ENCODE measurements at regions of chr14 and their contacts with region 1.

Region 1: GRCh38 chr14:89365061-89365801 is 51.8 kb downstream of the FOXN3 start:
- DNase-seq: peak; percentile 84
- H3K4me3 Mint-ChIP-seq: peak overlapping the region; percentile 80
- H3K27ac Mint-ChIP-seq: peak overlapping the region; percentile 92
- H3K4me1 Mint-ChIP-seq: peaks cover 38% of the 10 kb centered on the region
- H3K27me3 Mint-ChIP-seq: no peaks in the 10 kb centered on the region

Region 2: GRCh38 chr14:89303457-89304435 is 61.5 kb before region 1 on chr14:
- intact Hi-C with region 1: loop called (anchors 2 kb)
- DNase-seq: peak; percentile 80
- H3K4me3 Mint-ChIP-seq: peak overlapping the region; percentile 84
- H3K27ac Mint-ChIP-seq: peak overlapping the region; percentile 88
- H3K4me1 Mint-ChIP-seq: peaks cover 41% of the 10 kb centered on the region
- H3K27me3 Mint-ChIP-seq: no peaks in the 10 kb centered on the region

Region 3: DNA sequence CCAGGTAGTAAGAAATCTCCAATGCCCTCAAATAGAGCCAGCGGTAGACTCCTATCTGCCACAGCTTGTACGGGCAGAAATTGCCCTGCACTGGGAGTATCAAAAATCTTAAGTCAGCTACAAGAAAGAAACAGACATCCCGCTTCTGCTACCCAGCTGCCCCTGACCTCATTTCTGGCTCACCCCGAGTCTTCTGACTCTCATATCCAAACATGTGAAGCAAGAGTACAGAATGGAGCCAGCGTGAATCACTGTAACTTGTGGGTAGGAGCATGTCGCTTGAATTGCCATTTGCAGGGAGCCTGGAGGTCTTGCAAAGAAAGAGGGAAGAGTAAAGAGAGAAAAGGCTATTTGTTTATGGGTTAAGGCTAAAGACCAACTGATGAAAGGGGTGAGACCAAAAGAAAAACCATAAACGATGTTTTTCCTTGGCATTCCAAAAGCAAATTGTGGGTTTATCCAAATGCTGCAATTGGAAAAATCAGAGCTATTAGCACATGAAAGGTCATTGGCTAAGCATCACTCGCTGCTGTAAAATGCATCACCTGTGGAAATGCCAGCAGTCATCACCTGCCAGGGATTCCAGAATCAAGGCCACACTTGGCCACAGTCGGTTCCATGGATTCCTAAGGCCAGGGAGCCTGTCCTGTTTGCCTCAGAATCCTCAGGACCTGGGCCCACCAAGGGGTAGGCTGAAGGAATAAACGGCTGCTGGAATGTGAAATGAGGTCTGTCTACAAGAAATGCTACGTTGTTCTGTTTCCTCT is 34.8 kb before region 1 on chr14:
- intact Hi-C with region 1: no loop called
- DNase-seq: no peak
- H3K4me3 Mint-ChIP-seq: no peak overlapping the region
- H3K27ac Mint-ChIP-seq: no peak overlapping the region
- H3K4me1 Mint-ChIP-seq: peaks cover 17% of the 10 kb centered on the region
- H3K27me3 Mint-ChIP-seq: no peaks in the 10 kb centered on the region

Region 4: DNA sequence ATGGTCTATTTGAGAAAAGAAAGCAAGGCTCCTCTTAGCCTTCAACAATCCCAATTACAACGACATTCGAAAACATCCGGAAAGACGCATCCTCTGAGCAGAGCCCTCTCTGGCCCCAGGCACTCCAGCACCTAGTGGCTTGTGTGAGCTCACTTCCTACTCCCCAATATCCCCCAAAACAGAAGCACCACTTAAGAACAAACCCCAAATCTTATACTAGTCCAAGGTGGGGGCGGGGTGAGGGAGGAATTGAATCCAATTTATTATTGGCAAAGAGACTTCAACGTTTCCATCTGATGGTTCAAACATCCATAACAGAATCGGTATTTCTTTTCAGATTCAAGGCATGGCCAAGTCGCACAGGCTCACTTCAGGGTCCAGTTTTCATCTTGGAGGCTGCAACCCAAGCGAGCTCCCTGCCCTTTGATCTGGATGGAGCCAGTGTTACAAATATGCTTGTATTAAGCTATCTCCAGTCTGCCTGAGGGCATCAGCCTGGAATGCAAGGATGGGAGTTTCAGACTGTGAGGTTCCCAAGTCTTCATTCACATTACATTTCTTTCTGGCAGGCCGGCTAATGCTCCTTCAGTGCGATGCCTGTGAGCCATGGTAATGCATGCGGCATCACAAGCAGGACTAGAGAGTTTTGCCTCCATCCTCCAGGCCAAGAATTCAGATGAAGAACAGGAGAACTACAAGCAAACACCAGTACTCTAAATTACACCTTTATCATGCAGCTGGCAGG is 184.3 kb after region 1 on chr14:
- intact Hi-C with region 1: no loop called
- DNase-seq: no peak
- H3K4me3 Mint-ChIP-seq: no peak overlapping the region
- H3K27ac Mint-ChIP-seq: peak overlapping the region; percentile 48
- H3K4me1 Mint-ChIP-seq: peaks cover 21% of the 10 kb centered on the region
- H3K27me3 Mint-ChIP-seq: no peaks in the 10 kb centered on the region

Measured in activated CD4-positive, alpha-beta T cell treated with anti-CD3 and anti-CD28 coated beads, Interleukin-2, amount 10 ng/mL, durations not matched to agents 24 days and 14 days (primary cell).